Activated B cell treated with CpG ODN at 0.5 μM for 24 hours (primary cell): ENCODE measurements at regions of chr21 and their contacts with region 1.

Region 1: DNA sequence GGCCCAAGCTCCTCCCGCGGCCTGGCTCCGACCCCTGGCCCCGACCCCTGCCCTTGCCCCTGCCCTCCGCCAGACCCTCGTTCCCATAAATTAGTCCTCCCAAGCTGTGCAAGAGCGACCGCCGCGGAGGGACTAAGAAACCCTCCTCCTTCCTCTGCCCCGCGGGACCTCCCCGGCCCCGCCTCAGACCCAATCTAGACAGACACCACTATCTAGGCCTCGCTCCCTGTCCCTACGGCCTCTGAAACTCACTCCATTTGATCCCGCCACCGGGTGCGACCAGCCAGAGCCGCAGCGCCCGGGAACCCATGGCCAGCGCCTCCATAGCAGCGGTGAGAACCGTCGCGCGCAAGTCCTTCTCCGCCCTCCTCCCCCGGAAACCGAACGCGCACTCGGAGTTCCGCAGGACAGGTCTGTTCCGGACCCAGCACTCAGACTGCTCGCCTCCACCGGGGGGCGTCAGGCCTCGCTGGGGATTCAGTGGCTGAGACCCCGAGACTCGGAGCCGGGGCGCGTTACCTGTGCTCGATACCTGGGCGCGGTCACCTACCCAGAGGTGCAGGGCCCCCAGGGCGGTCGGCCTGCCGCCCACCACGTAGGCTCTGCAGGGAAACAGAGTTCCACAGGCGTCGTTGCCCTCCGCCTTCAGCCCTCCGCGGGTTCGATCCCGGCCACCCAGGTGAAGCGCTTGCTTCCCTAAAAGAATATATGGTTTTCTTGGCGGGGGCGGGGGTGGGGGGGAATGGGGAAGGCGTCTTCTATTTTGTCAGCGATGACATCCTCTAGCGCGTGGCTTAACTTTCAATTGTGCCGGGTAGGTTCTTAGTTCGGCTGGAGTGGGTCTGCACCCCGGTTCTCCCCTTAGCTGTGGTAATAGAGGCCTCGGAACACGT is at the start of gene MRPL39:
- DNase-seq: peak; percentile 85
- ATAC-seq: peak; percentile 89
- H3K4me3 Mint-ChIP-seq: peak within 1 kb of the TSS; percentile 100
- H3K27ac Mint-ChIP-seq: peak within 1 kb of the TSS; percentile 99
- H3K4me1 Mint-ChIP-seq: peaks cover 35% of the 10 kb centered on the region
- H3K27me3 Mint-ChIP-seq: no peaks in the 10 kb centered on the region
- CTCF ChIP-seq: no peak
- total RNA-seq, gene MRPL39: 43.6 and 46.3 TPM in 2 replicates

Region 2: DNA sequence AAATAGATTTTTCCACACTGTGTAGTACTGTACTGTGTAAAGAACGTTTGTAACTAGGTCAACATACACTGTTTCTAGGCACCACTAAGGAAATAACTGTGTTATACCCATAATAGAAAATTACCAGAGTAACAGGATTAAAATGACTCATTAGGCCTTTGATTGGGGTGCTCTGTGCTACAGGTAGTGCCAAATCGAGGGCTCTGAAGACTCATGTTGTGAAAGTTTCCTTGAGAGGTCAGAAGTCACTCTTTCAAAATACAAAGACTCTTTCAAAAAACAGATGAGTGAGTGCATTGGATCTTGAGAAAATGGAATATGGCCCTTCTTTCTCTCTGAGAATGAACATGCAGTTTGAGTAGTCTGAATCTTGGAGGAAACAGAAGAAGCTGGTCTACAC is 143.1 kb before region 1 on chr21:
- CTCF ChIA-PET with region 1: no interaction called
- POLR2A ChIA-PET with region 1: no interaction called
- intact Hi-C with region 1: no loop called
- DNase-seq: no peak
- ATAC-seq: no peak
- H3K4me3 Mint-ChIP-seq: no peak overlapping the region
- H3K27ac Mint-ChIP-seq: no peak overlapping the region
- H3K4me1 Mint-ChIP-seq: peaks cover 44% of the 10 kb centered on the region
- H3K27me3 Mint-ChIP-seq: no peaks in the 10 kb centered on the region
- CTCF ChIP-seq: no peak

Region 3: GRCh38 chr21:25573409-25574206 is 33.8 kb before region 1 on chr21:
- CTCF ChIA-PET with region 1: interaction called, 8 read pairs
- POLR2A ChIA-PET with region 1: interaction called, 5 read pairs
- intact Hi-C with region 1: loop called (anchors 1 kb)
- DNase-seq: no peak
- ATAC-seq: peak; percentile 53
- H3K4me3 Mint-ChIP-seq: peak overlapping the region; percentile 75
- H3K27ac Mint-ChIP-seq: peak overlapping the region; percentile 90
- H3K4me1 Mint-ChIP-seq: peaks cover 90% of the 10 kb centered on the region
- H3K27me3 Mint-ChIP-seq: no peaks in the 10 kb centered on the region
- CTCF ChIP-seq: no peak

Region 4: GRCh38 chr21:25639551-25640201 is 32.3 kb after region 1 on chr21:
- CTCF ChIA-PET with region 1: interaction called, 30 read pairs
- POLR2A ChIA-PET with region 1: no interaction called
- intact Hi-C with region 1: loop called (anchors 1 kb)
- DNase-seq: peak; percentile 55
- ATAC-seq: peak; percentile 88
- H3K4me3 Mint-ChIP-seq: peak overlapping the region; percentile 75
- H3K27ac Mint-ChIP-seq: peak overlapping the region; percentile 63
- H3K4me1 Mint-ChIP-seq: peaks cover 17% of the 10 kb centered on the region
- H3K27me3 Mint-ChIP-seq: peaks cover 4% of the 10 kb centered on the region
- CTCF ChIP-seq: peak; percentile 16

Region 5: DNA sequence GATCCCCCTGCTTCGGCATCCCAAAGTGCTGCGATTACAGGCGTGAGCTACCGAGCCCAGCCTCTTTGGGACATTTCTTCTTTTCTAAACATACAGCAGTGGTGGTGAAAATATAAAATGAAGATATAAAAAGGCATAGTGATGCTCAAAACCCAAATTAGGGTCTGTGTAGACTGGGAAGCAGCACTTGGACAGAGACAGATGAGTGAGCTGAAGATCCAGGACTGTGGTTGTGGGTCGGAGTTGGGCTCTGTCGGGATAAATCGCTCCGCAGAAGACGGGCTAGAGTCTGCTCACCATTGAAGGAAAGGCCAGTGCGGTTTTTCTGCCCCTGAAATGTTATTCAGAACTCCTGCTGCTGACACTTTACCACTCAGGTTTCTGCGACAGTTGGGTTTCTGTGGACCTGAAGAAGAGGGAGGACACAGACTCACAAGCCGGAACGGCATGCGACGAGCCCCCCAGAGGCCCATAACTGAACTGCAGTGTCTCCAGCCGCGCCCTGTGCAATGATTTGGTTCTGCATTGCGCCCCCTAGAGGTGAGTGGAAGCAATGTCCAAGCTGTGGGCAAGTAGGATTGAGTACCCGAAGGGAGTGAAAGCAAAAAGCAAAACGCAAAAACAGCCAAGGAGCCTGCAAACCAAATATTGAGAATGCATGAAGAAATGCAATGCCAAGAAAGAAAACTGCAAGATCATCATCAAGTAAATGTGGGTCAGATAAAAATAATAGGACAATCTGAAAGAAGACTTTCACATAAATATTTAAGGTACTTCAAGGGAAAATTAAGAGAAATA is 194.0 kb after region 1 on chr21:
- CTCF ChIA-PET with region 1: interaction called, 4 read pairs
- POLR2A ChIA-PET with region 1: no interaction called
- intact Hi-C with region 1: loop called (anchors 1 kb)
- DNase-seq: peak; percentile 56
- ATAC-seq: peak; percentile 100
- H3K4me3 Mint-ChIP-seq: no peak overlapping the region
- H3K27ac Mint-ChIP-seq: no peak overlapping the region
- H3K4me1 Mint-ChIP-seq: peaks cover 6% of the 10 kb centered on the region
- H3K27me3 Mint-ChIP-seq: peaks cover 11% of the 10 kb centered on the region
- CTCF ChIP-seq: peak; percentile 55

Region 6: DNA sequence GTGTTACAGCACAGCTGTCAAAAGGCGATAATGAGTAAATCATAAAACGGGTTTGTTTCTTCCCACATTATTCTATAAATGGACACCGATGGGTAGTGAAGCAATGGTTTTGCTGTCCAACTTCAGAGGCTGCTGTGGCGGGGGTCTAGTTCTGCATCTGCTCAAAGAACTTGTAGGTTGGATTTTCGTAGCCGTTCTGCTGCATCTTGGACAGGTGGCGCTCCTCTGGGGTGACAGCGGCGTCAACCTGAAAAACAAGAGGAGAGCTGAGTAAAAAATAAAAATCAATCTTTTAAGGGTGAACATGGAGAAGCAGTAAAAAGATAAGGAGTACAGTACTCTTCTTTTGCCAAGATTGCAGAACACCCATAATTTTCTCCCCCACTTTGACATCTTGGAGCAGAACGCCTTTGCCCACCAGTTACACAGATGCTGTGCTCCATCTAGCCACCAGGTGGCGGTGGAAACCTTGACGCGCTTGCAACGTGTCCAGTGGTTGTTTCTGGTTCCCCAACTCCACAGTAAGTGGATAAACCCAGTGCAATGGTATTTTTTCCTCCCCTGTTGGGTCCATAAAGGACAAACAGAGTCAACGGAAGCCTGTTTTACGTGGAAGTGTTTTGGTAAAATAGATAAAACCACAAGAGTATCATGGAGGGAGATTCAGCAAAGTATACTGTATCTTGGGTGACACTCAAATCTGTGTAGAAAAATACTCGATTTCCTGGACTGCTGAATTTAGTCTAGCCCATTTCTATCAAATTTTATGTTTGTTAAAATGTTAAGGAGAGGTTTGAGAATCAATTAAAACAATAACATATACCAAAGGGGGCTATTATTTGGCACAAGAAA is 274.4 kb after region 1 on chr21:
- CTCF ChIA-PET with region 1: interaction called, 5 read pairs
- POLR2A ChIA-PET with region 1: no interaction called
- intact Hi-C with region 1: loop called (anchors 1 kb)
- DNase-seq: peak; percentile 39
- ATAC-seq: peak; percentile 87
- H3K4me3 Mint-ChIP-seq: no peak overlapping the region
- H3K27ac Mint-ChIP-seq: no peak overlapping the region
- H3K4me1 Mint-ChIP-seq: no peaks in the 10 kb centered on the region
- H3K27me3 Mint-ChIP-seq: no peaks in the 10 kb centered on the region
- CTCF ChIP-seq: peak; percentile 33

Region 7: DNA sequence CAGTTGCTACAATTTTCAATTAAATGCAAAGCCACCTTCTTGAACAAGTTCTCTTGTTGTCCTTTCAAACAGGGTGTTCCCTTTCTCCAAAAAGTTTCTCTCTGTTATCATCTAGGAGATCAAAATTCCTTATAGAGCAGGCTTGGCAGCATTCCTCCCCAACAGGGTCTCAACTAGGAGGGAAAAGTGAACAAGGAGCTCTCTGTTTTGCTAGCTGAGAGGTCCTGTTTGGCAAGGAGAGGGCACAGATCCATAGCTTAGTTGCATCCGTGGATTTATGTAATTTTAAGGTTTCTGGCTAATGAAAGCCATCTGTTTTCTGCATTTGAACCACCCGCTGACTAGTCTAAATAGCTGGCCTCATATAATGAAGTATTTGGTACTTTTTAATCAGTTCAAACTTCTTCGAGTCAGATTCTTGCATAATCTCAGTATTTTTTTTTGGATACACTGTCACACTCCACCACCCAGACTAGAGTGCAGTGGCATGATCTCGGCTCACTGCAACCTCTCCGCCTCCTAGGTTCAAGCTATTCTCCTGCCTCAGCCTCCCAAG is 509.1 kb after region 1 on chr21:
- CTCF ChIA-PET with region 1: no interaction called
- POLR2A ChIA-PET with region 1: no interaction called
- intact Hi-C with region 1: no loop called
- DNase-seq: no peak
- ATAC-seq: no peak
- H3K4me3 Mint-ChIP-seq: no peak overlapping the region
- H3K27ac Mint-ChIP-seq: no peak overlapping the region
- H3K4me1 Mint-ChIP-seq: peaks cover 26% of the 10 kb centered on the region
- H3K27me3 Mint-ChIP-seq: no peaks in the 10 kb centered on the region
- CTCF ChIP-seq: no peak

Region 8: GRCh38 chr21:26170471-26171257 is 563.3 kb after region 1 on chr21 and contains the start of gene APP:
- CTCF ChIA-PET with region 1: no interaction called
- POLR2A ChIA-PET with region 1: no interaction called
- intact Hi-C with region 1: loop called (anchors 1 kb)
- DNase-seq: peak; percentile 96
- ATAC-seq: peak; percentile 90
- H3K4me3 Mint-ChIP-seq: peak within 1 kb of the TSS; percentile 91
- H3K27ac Mint-ChIP-seq: no peak within 1 kb of the TSS
- H3K4me1 Mint-ChIP-seq: peaks cover 18% of the 10 kb centered on the region
- H3K27me3 Mint-ChIP-seq: peaks cover 8% of the 10 kb centered on the region
- CTCF ChIP-seq: peak; percentile 48
- total RNA-seq, gene APP: 28.2 and 32.1 TPM in 2 replicates